Adrenal gland (tissue), 19 donors: ENCODE measurements at regions of chr17 and their contacts with region 1.

Region 1: GRCh38 chr17:12118617-12119016 is 97.9 kb downstream of the MAP2K4 start:
- DNase-seq: no peak
- H3K4me3 ChIP-seq: no peak overlapping the region
- H3K27ac ChIP-seq: no peak overlapping the region
- H3K4me1 ChIP-seq: peaks cover 0 to 8% of the 10 kb centered on the region in 2 donors
- H3K27me3 ChIP-seq: no peaks in the 10 kb centered on the region
- CTCF ChIP-seq: no peak
- POLR2A ChIP-seq: no peak

Region 2: GRCh38 chr17:12020642-12021622 is 97.7 kb before region 1 on chr17 and contains the start of gene MAP2K4:
- intact Hi-C with region 1: loop called in 1 of 2 experiments (anchors 10 kb)
- DNase-seq: peak; percentile 88 to 96 (median 94)
- H3K4me3 ChIP-seq: peak within 1 kb of the TSS; percentile 53 to 99 (median 84)
- H3K27ac ChIP-seq: peak within 1 kb of the TSS in 4 of 5 donors; percentile 50 to 95 (median 90)
- H3K4me1 ChIP-seq: peaks cover 12 to 39% of the 10 kb centered on the region in 2 donors
- H3K27me3 ChIP-seq: no peaks in the 10 kb centered on the region
- CTCF ChIP-seq: no peak
- POLR2A ChIP-seq: peak; percentile 95 to 96
- total RNA-seq, gene MAP2K4: 23.3 to 55.7 (median 35.5) TPM

Region 3: DNA sequence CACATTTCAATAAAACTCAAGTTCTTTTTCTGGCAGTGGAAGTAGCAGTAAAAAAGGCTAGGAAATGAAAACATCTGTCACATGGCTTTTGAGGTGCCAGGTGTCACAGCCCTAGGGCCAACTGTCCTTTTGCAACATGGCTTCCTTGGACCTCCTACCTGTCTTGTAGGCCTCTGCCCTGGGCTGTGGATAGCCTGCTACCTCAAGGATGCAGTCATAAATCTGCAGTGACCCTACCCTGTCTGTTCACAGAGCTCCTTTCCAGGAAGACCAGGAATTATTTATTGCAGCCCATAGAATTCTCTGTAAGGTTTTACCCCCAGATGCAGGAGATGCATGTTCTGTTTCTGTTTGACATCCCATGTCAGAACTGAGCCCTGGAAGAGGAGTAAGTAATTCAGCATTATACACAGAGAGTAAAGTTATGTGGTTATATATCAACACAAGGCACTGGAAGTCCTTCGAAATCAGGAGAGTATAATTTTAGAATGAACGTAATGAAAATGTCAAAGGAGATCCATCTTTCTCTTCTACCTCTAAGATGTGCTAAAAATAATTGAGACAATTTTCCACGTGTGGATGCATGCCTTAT is 74.6 kb after region 1 on chr17:
- intact Hi-C with region 1: no loop called
- DNase-seq: no peak
- H3K4me3 ChIP-seq: no peak overlapping the region
- H3K27ac ChIP-seq: no peak overlapping the region
- H3K4me1 ChIP-seq: no peaks in the 10 kb centered on the region
- H3K27me3 ChIP-seq: no peaks in the 10 kb centered on the region
- CTCF ChIP-seq: no peak
- POLR2A ChIP-seq: no peak

Region 4: DNA sequence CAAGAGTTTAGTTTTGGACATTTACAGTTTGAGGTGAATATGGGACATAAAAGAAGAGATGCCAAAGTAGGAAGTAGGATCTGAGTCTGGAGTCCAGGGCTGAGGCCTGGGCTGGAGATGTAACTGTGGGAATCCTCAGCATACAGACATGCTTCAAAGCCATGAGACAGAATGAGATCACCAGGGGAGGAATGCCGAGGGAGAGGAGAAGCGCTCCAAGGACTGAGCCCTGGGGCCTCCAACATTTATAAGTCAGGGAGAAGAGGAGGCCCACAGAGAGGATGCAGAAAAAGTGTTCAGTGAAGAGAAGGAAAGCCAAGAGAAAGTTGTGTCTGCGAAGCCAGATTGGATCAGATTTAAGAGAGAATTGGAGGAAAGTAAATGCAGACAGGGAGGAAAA is 269.6 kb after region 1 on chr17:
- intact Hi-C with region 1: no loop called
- DNase-seq: no peak
- H3K4me3 ChIP-seq: no peak overlapping the region
- H3K27ac ChIP-seq: no peak overlapping the region
- H3K4me1 ChIP-seq: no peaks in the 10 kb centered on the region
- H3K27me3 ChIP-seq: no peaks in the 10 kb centered on the region
- CTCF ChIP-seq: no peak
- POLR2A ChIP-seq: no peak